Motor neuron (in vitro differentiated cells): ENCODE measurements at regions of chr5 and their contacts with region 1.

Region 1: GRCh38 chr5:139787568-139788293 is 7.9 kb upstream of the PSD2 start:
- ATAC-seq: peak; percentile 76 to 92 (median 91)
- H3K4me3 ChIP-seq: peak overlapping the region; percentile 22 to 50 (median 37)
- H3K27ac ChIP-seq: no peak overlapping the region
- H3K4me1 ChIP-seq: peaks cover 0 to 3% of the 10 kb centered on the region in 2 donors

Region 2: DNA sequence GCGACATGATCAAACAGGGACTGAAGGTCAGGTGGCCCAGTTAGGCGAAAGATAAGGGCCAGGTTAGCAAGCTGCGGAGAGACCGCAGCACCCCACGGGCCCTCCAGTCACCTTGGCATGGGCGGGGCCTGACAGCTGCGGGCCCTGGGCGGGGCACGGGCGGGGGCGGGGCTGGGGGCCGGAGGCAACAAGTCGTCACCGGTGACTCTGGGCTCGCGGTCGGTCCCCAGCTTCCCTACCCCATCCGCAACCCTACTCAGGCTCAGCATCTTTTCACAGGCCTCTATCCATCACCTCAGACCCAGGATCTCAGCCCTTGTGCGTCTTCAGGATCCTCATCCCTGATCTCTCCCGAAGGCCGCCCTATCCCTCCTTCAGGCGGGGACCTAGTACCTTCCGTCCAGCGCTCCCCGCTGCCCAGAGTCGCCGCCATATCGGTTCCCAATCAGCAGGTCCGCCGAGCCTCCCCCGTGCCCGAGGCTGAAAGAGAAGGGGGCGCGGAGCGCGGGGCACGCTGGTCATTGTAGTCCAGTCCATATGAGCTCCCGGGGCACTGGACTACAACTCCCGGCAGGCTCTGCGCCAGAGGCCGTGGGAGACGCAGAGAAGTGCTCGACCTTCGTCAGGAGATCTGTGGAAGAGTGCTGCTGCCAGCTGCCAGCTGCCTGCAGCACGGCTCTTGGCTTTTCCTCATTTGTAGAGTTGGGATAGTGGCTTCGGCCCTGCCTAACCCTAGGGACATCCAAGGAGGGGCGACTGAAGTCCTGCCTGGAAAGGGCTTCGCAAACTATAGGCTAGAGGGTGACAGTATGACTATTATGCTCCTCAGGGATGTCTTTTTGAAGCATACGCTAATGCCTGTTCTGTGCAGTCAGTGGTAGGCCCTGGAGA is 348.5 kb before region 1 on chr5 and contains the start of gene DNAJC18:
- in situ Hi-C with region 1: loop called in 1 of 9 experiments (anchors 25 kb)
- ATAC-seq: peak; percentile 95 to 99 (median 98)
- H3K4me3 ChIP-seq: peak within 1 kb of the TSS; percentile 75 to 98 (median 95)
- H3K27ac ChIP-seq: peak within 1 kb of the TSS; percentile 83 to 90
- H3K4me1 ChIP-seq: peaks cover 15 to 17% of the 10 kb centered on the region in 2 donors
- total RNA-seq, gene DNAJC18: 4.6 to 26.3 (median 20.5) TPM

Region 3: DNA sequence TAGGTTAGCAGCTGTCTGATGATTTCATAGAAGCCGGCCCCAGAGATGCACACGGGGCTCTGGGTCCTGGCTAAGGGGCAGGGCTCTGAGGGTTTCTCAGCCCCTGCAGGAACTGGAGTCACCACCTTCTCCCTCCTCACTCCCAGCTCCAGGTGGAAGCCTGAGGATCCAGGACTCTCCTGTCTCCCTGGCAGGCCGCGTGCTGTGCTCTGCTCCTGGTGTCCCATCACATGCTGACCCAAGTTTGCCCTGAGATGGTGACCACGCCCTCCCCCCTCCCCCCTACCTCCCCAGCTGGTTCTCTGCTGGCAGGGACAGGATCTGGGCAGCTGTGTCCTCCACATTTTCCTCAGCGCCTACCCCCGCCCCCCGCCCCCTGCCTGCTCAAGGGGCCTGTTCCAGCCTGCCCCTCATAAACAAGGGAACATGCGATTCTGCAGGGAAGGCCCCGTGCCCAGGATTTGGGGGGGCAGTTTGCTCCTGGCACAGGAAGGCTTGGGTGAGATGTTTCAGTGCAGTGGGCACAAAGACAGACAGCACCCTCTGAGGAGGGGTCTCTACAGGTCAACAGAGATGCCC is 95.3 kb after region 1 on chr5:
- in situ Hi-C with region 1: loop called in 1 of 9 experiments (anchors 25 kb)
- ATAC-seq: peak; percentile 22 to 83 (median 72)
- H3K4me3 ChIP-seq: no peak overlapping the region
- H3K27ac ChIP-seq: peak overlapping the region in 1 of 2 donors; percentile 63
- H3K4me1 ChIP-seq: peaks cover 13 to 26% of the 10 kb centered on the region in 2 donors

Region 4: GRCh38 chr5:139904816-139905661 is 117.3 kb after region 1 on chr5:
- in situ Hi-C with region 1: no loop called
- ATAC-seq: peak; percentile 17 to 66 (median 53)
- H3K4me3 ChIP-seq: peak overlapping the region in 4 of 5 donors; percentile 33 to 45 (median 37)
- H3K27ac ChIP-seq: no peak overlapping the region
- H3K4me1 ChIP-seq: peaks cover 0 to 8% of the 10 kb centered on the region in 2 donors

Region 5: DNA sequence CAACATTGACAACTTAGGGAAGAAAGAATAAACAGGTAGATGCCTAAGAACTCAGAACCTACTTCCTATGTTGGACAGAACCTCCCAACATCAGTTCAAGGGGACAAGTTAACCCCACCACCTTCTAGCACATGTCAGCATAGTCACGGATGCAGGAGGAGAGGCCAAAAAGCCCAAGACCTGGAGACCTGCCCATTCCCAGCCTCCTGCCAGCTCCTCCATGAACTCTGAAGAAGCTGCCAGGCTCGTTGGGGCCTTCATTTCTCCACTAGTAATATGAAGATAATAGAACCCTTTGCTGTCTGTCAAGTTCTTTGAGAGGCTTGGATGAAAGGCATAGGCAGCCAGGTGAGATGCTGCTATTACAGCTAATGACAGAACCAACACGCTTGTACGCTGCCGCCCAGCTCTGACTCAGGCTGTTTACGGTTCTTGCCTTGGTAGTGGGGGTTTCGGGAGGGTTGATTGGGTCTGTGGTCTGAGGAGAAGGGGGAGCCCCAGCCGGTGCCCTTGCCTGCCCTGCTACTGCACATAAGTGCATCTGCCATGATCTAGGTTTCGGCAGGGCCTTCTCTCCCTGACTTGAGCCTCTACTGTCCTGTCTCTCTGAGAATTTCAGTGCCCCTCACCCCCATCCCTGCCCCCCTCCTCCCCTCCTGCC is 173.1 kb after region 1 on chr5:
- in situ Hi-C with region 1: loop called in 7 of 9 experiments (anchors 5 to 25 kb)
- ATAC-seq: no peak
- H3K4me3 ChIP-seq: no peak overlapping the region
- H3K27ac ChIP-seq: no peak overlapping the region
- H3K4me1 ChIP-seq: no peaks in the 10 kb centered on the region

Region 6: DNA sequence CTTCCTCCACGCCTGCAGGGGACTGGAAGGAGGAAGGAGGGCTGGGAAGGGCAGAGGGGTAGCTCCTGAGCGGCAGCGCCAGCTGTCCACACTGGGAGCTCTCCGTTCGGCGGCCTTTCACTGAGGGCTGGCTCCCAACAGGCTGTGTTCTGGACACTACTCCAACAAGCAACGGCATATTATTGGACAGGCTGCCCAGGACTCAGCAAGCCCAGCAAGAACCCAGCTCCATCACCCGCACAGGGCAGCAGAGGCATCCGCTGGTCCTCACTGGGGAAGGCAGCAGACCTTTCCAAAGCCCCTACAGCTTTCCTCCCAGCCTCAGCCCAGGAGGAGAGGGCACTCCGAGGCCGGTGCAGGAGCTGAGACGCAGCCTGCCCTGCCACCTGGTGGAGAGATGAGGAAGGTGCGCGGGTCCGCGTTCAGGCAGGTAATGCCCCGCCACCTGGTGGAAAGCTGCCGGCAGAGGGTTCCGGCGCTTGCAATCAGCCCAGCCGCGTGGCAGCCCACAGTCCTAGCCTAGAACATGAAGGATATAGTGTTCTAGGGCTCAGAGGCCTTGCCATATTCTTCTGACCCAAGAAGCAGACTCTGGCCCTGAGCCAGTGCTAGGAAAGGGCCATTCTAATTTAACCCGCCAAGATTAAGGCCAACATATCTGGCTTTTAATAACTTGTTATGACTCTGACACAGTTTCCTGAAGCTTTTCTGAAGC is 181.0 kb after region 1 on chr5:
- in situ Hi-C with region 1: loop called (anchors 5 to 25 kb)
- ATAC-seq: peak; percentile 99 to 100 (median 100)
- H3K4me3 ChIP-seq: no peak overlapping the region
- H3K27ac ChIP-seq: no peak overlapping the region
- H3K4me1 ChIP-seq: no peaks in the 10 kb centered on the region

Region 7: GRCh38 chr5:139974661-139975060 is 186.9 kb after region 1 on chr5:
- in situ Hi-C with region 1: loop called in 8 of 9 experiments (anchors 5 to 25 kb)
- ATAC-seq: peak in 1 of 8 experiments; percentile 19
- H3K4me3 ChIP-seq: no peak overlapping the region
- H3K27ac ChIP-seq: no peak overlapping the region
- H3K4me1 ChIP-seq: no peaks in the 10 kb centered on the region

Region 8: DNA sequence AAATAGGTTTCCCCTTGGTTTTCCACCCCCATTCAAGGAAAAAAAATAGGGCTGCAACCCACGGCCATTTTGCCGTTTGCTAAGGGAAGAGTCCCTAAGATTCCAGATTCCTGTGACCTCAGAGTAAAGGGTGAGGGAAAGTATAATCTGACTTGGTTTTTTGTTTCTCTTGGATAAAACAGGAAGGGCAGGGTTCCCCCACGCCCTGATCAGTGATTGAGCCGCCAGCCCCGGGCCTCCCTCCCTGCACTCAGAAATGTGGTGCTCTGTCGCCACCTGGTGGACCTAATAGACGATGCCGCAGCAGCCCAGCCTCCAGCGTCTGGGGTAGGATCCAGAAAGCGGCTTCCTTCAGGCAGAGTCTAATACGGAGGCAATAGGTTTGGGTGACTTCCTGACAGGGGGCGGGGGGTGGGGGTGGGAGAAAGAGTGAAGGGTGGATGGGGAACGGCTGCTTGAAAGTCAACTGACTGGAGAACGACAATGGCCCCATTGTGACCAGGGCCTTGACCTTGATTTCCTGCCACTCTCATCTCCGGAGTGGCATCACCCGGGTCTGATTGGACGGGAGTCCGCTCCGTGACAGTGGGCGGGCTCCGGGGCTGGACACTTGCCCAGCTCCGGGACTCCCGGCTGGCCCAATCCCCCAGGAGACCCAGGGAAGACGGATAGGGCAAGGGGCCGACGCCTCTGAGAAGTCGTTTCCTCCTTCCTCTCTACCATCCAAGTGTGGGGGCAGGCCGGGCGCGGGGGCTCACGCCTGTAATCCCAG is 369.5 kb after region 1 on chr5:
- in situ Hi-C with region 1: loop called in 3 of 9 experiments (anchors 25 kb)
- ATAC-seq: peak; percentile 89 to 99 (median 96)
- H3K4me3 ChIP-seq: peak overlapping the region in 2 of 5 donors; percentile 1 to 10
- H3K27ac ChIP-seq: no peak overlapping the region
- H3K4me1 ChIP-seq: peaks cover 0 to 15% of the 10 kb centered on the region in 2 donors